Thyroid gland (tissue), 4 donors: ENCODE measurements at regions of chr19 and their contacts with region 1.

Region 1: GRCh38 chr19:44782729-44783128 is 5.0 kb downstream of the CBLC start:
- DNase-seq: no peak
- H3K4me3 ChIP-seq: no peak overlapping the region
- H3K27ac ChIP-seq: no peak overlapping the region
- H3K4me1 ChIP-seq: peaks cover 3 to 6% of the 10 kb centered on the region in 2 donors
- H3K27me3 ChIP-seq: no peaks in the 10 kb centered on the region
- CTCF ChIP-seq: no peak
- POLR2A ChIP-seq: no peak

Region 2: GRCh38 chr19:44570984-44571684 is 211.6 kb before region 1 on chr19:
- intact Hi-C with region 1: loop called (anchors 10 kb)
- DNase-seq: peak; percentile 54 to 62
- H3K4me3 ChIP-seq: no peak overlapping the region
- H3K27ac ChIP-seq: no peak overlapping the region
- H3K4me1 ChIP-seq: no peaks in the 10 kb centered on the region
- H3K27me3 ChIP-seq: no peaks in the 10 kb centered on the region
- CTCF ChIP-seq: peak in 5 of 6 experiments; percentile 22 to 75 (median 65)
- POLR2A ChIP-seq: no peak

Region 3: GRCh38 chr19:44954824-44955586 is 172.3 kb after region 1 on chr19 and contains the start of gene CLPTM1:
- intact Hi-C with region 1: loop called (anchors 10 kb)
- DNase-seq: peak; percentile 96 to 97
- H3K4me3 ChIP-seq: peak within 1 kb of the TSS; percentile 56 to 98 (median 93)
- H3K27ac ChIP-seq: peak within 1 kb of the TSS; percentile 89 to 94 (median 93)
- H3K4me1 ChIP-seq: peaks cover 25 to 31% of the 10 kb centered on the region in 2 donors
- H3K27me3 ChIP-seq: no peaks in the 10 kb centered on the region
- CTCF ChIP-seq: peak in 3 of 6 experiments; percentile 17 to 40 (median 37)
- POLR2A ChIP-seq: peak in 1 of 2 donors; percentile 80
- total RNA-seq, gene CLPTM1: 65.4 to 117 (median 104) TPM